Right cardiac atrium (tissue), 5 donors: ENCODE measurements at regions of chr11 and their contacts with region 1.

Region 1: DNA sequence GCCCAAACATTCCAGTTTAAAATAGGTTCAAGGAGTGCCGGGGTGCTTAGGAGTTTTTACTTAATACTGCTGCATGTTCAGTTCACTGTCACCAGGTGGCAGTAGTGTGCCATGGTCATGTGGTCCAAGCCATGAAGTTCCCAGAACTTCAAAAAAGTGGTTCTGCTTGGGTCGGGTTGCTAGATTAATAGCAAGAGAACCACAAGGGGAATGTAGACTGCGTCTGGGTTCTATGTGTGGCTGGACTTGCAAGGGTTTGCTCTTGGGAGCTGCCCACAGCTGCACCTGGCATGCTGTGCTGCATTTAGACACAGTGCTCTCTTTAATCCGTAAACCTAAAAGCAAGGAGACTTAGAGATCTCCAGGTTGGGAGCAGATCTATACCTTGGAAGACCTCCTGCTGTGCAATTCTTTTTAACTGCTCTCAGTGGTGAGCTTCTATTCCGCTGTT is 6.5 kb upstream of the SPON1 start:
- DNase-seq: peak; percentile 44 to 73 (median 59)
- ATAC-seq: peak; percentile 67 to 75
- H3K4me3 ChIP-seq: no peak overlapping the region
- H3K27ac ChIP-seq: no peak overlapping the region
- H3K4me1 ChIP-seq: peaks cover 2% of the 10 kb centered on the region
- H3K27me3 ChIP-seq: no peaks in the 10 kb centered on the region

Region 2: GRCh38 chr11:14148653-14149273 is 192.8 kb after region 1 on chr11:
- intact Hi-C with region 1: loop called (anchors 5 kb)
- DNase-seq: no peak
- ATAC-seq: peak; percentile 65 to 74
- H3K4me3 ChIP-seq: no peak overlapping the region
- H3K27ac ChIP-seq: no peak overlapping the region
- H3K4me1 ChIP-seq: no peaks in the 10 kb centered on the region
- H3K27me3 ChIP-seq: no peaks in the 10 kb centered on the region